Right ventricle myocardium inferior (tissue), 1 donor: ENCODE measurements at regions of chr19 and their contacts with region 1.

Region 1: GRCh38 chr19:16594131-16594586 is 21.9 kb upstream of the SLC35E1 start:
- DNase-seq: peak; percentile 16
- ATAC-seq: peak; percentile 24

Region 2: DNA sequence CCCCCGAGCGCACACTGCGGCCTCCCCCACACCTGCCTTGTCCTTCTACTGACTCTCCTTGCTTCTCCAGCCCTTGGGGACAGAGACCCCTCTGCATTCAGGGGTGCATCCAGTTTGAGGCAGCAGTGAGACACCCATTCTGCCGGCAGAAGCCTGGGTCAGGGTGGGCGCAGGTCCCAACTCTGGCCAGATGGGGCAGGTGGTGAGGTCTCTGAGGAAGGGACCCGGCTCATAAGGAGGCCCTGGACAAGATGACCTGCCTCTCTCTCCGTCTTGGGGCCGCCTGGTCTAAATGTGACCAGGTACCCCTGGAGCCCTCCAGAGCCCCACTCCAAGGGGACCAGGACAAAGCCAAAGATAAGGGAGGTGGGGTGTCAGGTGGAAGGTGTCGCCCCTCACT is 58.0 kb before region 1 on chr19:
- intact Hi-C with region 1: no loop called
- DNase-seq: no peak
- ATAC-seq: no peak

Region 3: GRCh38 chr19:16702118-16702517 is 108.0 kb after region 1 on chr19:
- intact Hi-C with region 1: loop called (anchors 10 kb)
- DNase-seq: no peak
- ATAC-seq: peak; percentile 89